Caco-2 (cell line): ENCODE measurements at regions of chr11 and their contacts with region 1.

Region 1: GRCh38 chr11:79493555-79494171 is 52.8 kb upstream of the TENM4 start:
- DNase-seq: peak; percentile 89 to 93
- H3K4me3 ChIP-seq: no peak overlapping the region
- H3K4me3 Mint-ChIP-seq: no peak overlapping the region
- H3K27ac Mint-ChIP-seq: no peak overlapping the region
- H3K4me1 ChIP-seq: no peaks in the 10 kb centered on the region
- H3K4me1 Mint-ChIP-seq: peaks cover 6% of the 10 kb centered on the region
- H3K27me3 ChIP-seq: no peaks in the 10 kb centered on the region
- H3K27me3 Mint-ChIP-seq: peaks cover 5% of the 10 kb centered on the region
- CTCF ChIP-seq: peak; percentile 96 to 98

Region 2: GRCh38 chr11:79227757-79228755 is 265.6 kb before region 1 on chr11:
- CTCF ChIA-PET with region 1: interaction called, 3 read pairs
- POLR2A ChIA-PET with region 1: no interaction called
- intact Hi-C with region 1: loop called (anchors 1 kb)
- DNase-seq: no peak
- H3K4me3 ChIP-seq: no peak overlapping the region
- H3K4me3 Mint-ChIP-seq: no peak overlapping the region
- H3K27ac Mint-ChIP-seq: no peak overlapping the region
- H3K4me1 ChIP-seq: no peaks in the 10 kb centered on the region
- H3K4me1 Mint-ChIP-seq: no peaks in the 10 kb centered on the region
- H3K27me3 ChIP-seq: 0 out of 2 replicates have a peak, but pooled peaks cover 1% of the 10 kb centered on the region
- H3K27me3 Mint-ChIP-seq: peaks cover 15% of the 10 kb centered on the region
- CTCF ChIP-seq: no peak

Region 3: GRCh38 chr11:79400717-79401686 is 92.7 kb before region 1 on chr11:
- CTCF ChIA-PET with region 1: interaction called, 3 read pairs
- POLR2A ChIA-PET with region 1: no interaction called
- intact Hi-C with region 1: loop called (anchors 1 kb)
- DNase-seq: peak; percentile 49 to 53
- H3K4me3 ChIP-seq: no peak overlapping the region
- H3K4me3 Mint-ChIP-seq: no peak overlapping the region
- H3K27ac Mint-ChIP-seq: no peak overlapping the region
- H3K4me1 ChIP-seq: no peaks in the 10 kb centered on the region
- H3K4me1 Mint-ChIP-seq: no peaks in the 10 kb centered on the region
- H3K27me3 ChIP-seq: no peaks in the 10 kb centered on the region; the same call in 1 of the 2 replicates
- H3K27me3 Mint-ChIP-seq: no peaks in the 10 kb centered on the region
- CTCF ChIP-seq: peak; percentile 65 to 71